PC-3 (cell line): ENCODE measurements at regions of chr7 and their contacts with region 1.

Region 1: DNA sequence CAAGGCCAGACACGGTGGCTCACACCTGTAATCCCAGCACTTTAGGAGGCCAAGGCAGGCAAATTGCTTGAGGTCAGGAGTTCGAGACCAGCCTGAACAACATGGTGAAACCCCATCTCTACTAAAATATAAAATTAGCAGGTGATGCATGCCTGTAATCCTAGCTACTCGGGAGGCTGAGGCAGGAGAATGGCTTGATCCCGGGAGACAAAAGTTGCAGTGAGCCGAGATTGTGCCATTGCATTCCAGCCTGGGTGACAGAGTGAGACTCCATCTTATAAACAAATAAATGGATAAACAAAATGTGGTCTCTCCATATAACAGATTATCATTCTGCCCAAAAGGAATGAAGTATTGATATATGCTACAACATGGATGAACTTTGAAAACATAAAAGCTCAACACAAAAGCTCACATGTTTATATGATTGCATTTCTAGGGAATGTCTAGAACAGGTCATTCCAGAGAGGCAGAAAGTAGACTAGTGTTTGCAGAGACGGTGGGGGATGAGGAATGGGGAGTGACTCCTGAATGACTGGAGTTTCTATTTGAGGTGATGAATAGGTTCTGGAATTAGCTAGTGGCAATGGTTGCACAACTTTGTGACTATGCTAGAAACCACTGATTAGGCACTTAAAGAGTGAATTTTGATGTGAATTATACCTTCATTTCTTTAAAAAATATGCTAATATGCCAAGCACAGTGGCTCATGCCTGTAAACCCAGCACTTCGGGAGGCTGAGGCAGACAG is 7.0 kb downstream of the KPNA7 start:
- DNase-seq: peak; percentile 94
- ATAC-seq: peak; percentile 95
- H3K4me3 ChIP-seq: no peak overlapping the region
- H3K27ac ChIP-seq: peak overlapping the region; percentile 95
- H3K4me1 ChIP-seq: peaks cover 31% of the 10 kb centered on the region
- H3K27me3 ChIP-seq: no peaks in the 10 kb centered on the region
- CTCF ChIP-seq: no peak

Region 2: DNA sequence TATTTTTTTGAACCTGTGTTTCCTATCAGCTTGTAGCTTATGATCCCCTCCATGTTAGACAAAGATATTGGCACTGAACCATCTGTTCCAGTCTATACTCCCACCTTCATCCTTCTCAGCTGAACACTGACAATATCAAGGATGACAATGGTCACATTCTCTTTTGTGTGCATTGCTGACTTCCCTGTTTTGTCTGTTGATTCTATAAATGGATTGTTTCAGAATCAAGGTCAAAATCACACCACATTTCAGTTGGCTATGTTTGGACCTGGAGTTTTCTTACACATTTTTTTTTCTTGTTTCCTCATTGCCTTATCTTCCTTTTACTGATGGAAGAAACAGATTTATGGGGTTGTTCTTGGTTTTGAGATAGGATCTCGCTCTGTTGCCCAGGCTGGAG is 45.7 kb before region 1 on chr7:
- CTCF ChIA-PET with region 1: no interaction called
- POLR2A ChIA-PET with region 1: no interaction called
- intact Hi-C with region 1: loop called (anchors 5 kb)
- DNase-seq: no peak
- ATAC-seq: no peak
- H3K4me3 ChIP-seq: no peak overlapping the region
- H3K27ac ChIP-seq: no peak overlapping the region
- H3K4me1 ChIP-seq: peaks cover 3% of the 10 kb centered on the region; the same call in 1 of the 2 replicates
- H3K27me3 ChIP-seq: no peaks in the 10 kb centered on the region
- CTCF ChIP-seq: no peak

Region 3: DNA sequence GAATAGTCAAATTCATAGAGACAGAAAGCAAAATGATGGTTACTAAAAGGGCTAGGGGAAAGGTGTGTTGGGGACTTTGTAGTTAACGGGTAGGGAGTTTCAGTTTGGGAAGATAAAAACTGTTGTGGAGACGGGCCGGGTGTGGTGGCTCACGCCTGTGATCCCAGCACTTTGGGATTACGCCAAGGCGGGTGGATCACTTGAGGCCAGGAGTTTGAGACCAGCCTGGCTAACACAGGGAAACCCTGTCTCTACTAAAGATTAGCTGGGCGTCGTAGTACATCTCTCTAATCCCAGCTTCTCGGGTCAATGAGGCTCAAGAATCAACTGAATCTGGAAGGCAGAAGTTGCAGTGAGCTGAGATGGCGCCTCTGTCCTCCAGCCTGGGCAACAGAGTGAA is 23.7 kb before region 1 on chr7:
- CTCF ChIA-PET with region 1: no interaction called
- POLR2A ChIA-PET with region 1: no interaction called
- intact Hi-C with region 1: no loop called
- DNase-seq: no peak
- ATAC-seq: no peak
- H3K4me3 ChIP-seq: no peak overlapping the region
- H3K27ac ChIP-seq: no peak overlapping the region
- H3K4me1 ChIP-seq: no peaks in the 10 kb centered on the region
- H3K27me3 ChIP-seq: no peaks in the 10 kb centered on the region
- CTCF ChIP-seq: no peak